PC-3 (cell line): ENCODE measurements at regions of chr3 and their contacts with region 1.

Region 1: DNA sequence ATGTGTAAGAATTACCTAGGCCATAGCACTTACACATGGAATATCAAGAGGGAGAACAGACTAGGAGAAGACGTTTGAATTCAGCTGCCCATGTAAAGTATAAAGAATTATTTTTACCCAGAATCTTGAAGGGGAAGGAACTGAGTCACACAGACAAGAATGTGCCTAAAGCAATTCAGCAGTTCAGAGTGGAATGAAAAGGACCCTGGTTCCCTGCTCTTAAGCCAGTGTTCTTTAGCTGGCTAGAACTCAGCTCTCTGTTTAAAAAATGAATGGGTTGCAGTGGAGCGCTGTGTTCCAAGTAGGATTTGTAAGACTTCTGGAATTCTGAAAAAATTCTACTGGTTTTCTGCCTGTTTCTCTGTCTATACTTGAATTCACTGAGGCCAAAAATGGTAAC is 440.2 kb downstream of the LPP start:
- DNase-seq: peak; percentile 86
- ATAC-seq: peak; percentile 83
- H3K4me3 ChIP-seq: peak overlapping the region; percentile 36; the same call in 1 of the 2 replicates
- H3K27ac ChIP-seq: peak overlapping the region; percentile 77
- H3K4me1 ChIP-seq: peaks cover 38% of the 10 kb centered on the region
- H3K27me3 ChIP-seq: no peaks in the 10 kb centered on the region
- CTCF ChIP-seq: no peak

Region 2: GRCh38 chr3:188482929-188483328 is 111.2 kb before region 1 on chr3:
- CTCF ChIA-PET with region 1: no interaction called
- POLR2A ChIA-PET with region 1: no interaction called
- intact Hi-C with region 1: loop called (anchors 5 kb)
- DNase-seq: no peak
- ATAC-seq: no peak
- H3K4me3 ChIP-seq: no peak overlapping the region
- H3K27ac ChIP-seq: no peak overlapping the region
- H3K4me1 ChIP-seq: peaks cover 13% of the 10 kb centered on the region
- H3K27me3 ChIP-seq: no peaks in the 10 kb centered on the region
- CTCF ChIP-seq: no peak

Region 3: GRCh38 chr3:188620752-188621151 is 26.6 kb after region 1 on chr3:
- CTCF ChIA-PET with region 1: no interaction called
- POLR2A ChIA-PET with region 1: interaction called, 31 read pairs
- intact Hi-C with region 1: no loop called
- DNase-seq: no peak
- ATAC-seq: no peak
- H3K4me3 ChIP-seq: no peak overlapping the region
- H3K27ac ChIP-seq: no peak overlapping the region
- H3K4me1 ChIP-seq: no peaks in the 10 kb centered on the region
- H3K27me3 ChIP-seq: no peaks in the 10 kb centered on the region
- CTCF ChIP-seq: no peak

Region 4: DNA sequence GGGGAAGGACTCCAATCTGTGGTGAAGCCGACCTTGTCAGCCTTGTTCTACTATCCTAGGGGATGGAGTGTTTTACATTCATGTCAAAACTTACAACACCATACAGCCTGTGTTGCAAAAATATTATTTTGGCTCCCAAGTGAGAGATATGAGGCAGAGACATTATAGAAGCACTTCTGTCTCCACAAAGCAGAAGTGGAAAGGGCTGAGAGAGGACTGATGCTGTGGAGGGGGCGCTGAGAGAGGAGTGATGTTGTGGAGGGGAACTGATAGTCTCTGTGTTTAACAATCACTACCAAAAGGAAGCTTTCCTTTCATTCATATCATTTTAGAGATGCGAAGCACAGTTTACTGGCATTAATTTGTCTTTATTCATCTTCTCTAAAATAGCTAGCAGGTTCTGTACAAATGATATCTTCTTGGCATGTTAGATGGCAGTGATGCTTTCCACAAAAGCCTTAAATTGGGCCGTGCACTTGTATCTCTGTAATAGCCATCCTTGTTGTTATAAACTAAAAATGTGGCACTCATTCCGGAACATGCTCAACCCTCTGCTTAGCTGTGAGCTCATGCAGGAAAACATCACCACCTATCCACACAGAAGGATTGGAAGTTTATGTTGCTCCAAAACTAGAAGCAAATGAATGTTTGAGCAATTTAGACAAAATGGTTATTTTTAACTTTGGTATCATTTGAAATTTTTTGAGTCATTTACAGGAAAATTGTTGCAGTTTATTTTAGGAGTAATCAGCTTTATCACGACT is 902.4 kb after region 1 on chr3:
- CTCF ChIA-PET with region 1: no interaction called
- POLR2A ChIA-PET with region 1: no interaction called
- intact Hi-C with region 1: no loop called
- DNase-seq: no peak
- ATAC-seq: no peak
- H3K4me3 ChIP-seq: no peak overlapping the region
- H3K27ac ChIP-seq: no peak overlapping the region
- H3K4me1 ChIP-seq: no peaks in the 10 kb centered on the region
- H3K27me3 ChIP-seq: no peaks in the 10 kb centered on the region
- CTCF ChIP-seq: no peak